Activated CD4-positive, alpha-beta T cell treated with anti-CD3 and anti-CD28 coated beads for 36 hours (primary cell): ENCODE measurements at regions of chr10 and their contacts with region 1.

Region 1: GRCh38 chr10:43361986-43362839 is 9.2 kb upstream of the FXYD4 start:
- DNase-seq: peak; percentile 99
- ATAC-seq: peak; percentile 96
- H3K4me3 Mint-ChIP-seq: peak overlapping the region; percentile 95
- H3K27ac Mint-ChIP-seq: peak overlapping the region; percentile 98
- H3K4me1 Mint-ChIP-seq: peaks cover 22% of the 10 kb centered on the region
- H3K27me3 Mint-ChIP-seq: no peaks in the 10 kb centered on the region

Region 2: GRCh38 chr10:42552493-42553407 is 809.5 kb before region 1 on chr10:
- CTCF ChIA-PET with region 1: no interaction called
- POLR2A ChIA-PET with region 1: no interaction called
- intact Hi-C with region 1: loop called in 1 of 2 experiments (anchors 2 kb)
- DNase-seq: peak; percentile 97
- ATAC-seq: peak; percentile 97
- H3K4me3 Mint-ChIP-seq: peak overlapping the region; percentile 94
- H3K27ac Mint-ChIP-seq: peak overlapping the region; percentile 94
- H3K4me1 Mint-ChIP-seq: peaks cover 33% of the 10 kb centered on the region
- H3K27me3 Mint-ChIP-seq: no peaks in the 10 kb centered on the region

Region 3: DNA sequence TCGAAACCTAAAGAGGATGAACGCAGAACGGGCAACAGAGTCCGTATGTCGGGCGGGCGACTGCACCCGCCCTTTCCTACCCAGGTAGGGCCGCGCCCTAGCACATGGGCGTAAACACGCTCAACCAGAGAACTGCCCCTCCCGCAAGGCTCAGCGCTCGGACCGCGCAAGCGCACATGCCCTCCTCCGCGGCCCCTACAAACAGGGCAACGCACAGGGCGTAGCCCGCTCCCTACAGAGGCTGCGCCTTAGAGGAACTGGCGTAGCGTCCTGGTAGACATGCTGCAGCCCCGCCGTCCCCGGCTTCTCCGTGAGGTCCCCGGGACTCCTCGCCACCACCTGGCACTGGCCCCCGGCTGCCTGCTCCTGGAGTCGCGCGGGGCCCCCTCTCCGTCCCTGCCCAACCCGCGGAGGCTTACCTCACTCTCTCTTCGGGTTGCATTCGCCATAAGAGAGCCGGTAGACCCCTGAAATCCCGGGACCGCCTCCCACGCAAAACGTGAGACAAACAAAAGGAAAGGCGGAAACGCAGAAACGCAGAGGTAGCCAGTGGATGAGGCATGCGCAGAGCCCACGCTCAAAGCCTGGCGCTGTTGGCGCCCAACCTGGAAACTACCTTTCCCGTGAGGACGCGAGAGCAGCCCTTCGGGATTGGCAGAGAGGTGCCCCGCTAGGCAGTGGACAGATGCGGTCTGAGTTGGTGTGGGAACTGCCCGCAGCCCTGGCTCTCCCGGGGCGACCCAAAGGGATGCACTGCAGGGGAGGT is 724.0 kb before region 1 on chr10 and contains the start of gene ZNF33B:
- CTCF ChIA-PET with region 1: no interaction called
- POLR2A ChIA-PET with region 1: no interaction called
- intact Hi-C with region 1: loop called in 1 of 2 experiments (anchors 5 kb)
- DNase-seq: peak; percentile 97
- ATAC-seq: peak; percentile 95
- H3K4me3 Mint-ChIP-seq: peak within 1 kb of the TSS; percentile 88
- H3K27ac Mint-ChIP-seq: peak within 1 kb of the TSS; percentile 97
- H3K4me1 Mint-ChIP-seq: peaks cover 25% of the 10 kb centered on the region
- H3K27me3 Mint-ChIP-seq: no peaks in the 10 kb centered on the region
- total RNA-seq, gene ZNF33B: 7.4 to 10.5 TPM

Region 4: GRCh38 chr10:43304687-43305340 is 57.4 kb before region 1 on chr10:
- CTCF ChIA-PET with region 1: no interaction called
- POLR2A ChIA-PET with region 1: no interaction called
- intact Hi-C with region 1: no loop called
- DNase-seq: peak; percentile 78
- ATAC-seq: peak; percentile 45
- H3K4me3 Mint-ChIP-seq: peak overlapping the region; percentile 51
- H3K27ac Mint-ChIP-seq: no peak overlapping the region
- H3K4me1 Mint-ChIP-seq: peaks cover 45% of the 10 kb centered on the region
- H3K27me3 Mint-ChIP-seq: no peaks in the 10 kb centered on the region

Region 5: GRCh38 chr10:43322769-43323168 is 39.4 kb before region 1 on chr10:
- CTCF ChIA-PET with region 1: interaction called, 3 read pairs
- POLR2A ChIA-PET with region 1: no interaction called
- intact Hi-C with region 1: loop called in 1 of 2 experiments (anchors 1 kb)
- DNase-seq: peak; percentile 93
- ATAC-seq: peak; percentile 100
- H3K4me3 Mint-ChIP-seq: no peak overlapping the region
- H3K27ac Mint-ChIP-seq: no peak overlapping the region
- H3K4me1 Mint-ChIP-seq: peaks cover 9% of the 10 kb centered on the region
- H3K27me3 Mint-ChIP-seq: peaks cover 2% of the 10 kb centered on the region

Region 6: DNA sequence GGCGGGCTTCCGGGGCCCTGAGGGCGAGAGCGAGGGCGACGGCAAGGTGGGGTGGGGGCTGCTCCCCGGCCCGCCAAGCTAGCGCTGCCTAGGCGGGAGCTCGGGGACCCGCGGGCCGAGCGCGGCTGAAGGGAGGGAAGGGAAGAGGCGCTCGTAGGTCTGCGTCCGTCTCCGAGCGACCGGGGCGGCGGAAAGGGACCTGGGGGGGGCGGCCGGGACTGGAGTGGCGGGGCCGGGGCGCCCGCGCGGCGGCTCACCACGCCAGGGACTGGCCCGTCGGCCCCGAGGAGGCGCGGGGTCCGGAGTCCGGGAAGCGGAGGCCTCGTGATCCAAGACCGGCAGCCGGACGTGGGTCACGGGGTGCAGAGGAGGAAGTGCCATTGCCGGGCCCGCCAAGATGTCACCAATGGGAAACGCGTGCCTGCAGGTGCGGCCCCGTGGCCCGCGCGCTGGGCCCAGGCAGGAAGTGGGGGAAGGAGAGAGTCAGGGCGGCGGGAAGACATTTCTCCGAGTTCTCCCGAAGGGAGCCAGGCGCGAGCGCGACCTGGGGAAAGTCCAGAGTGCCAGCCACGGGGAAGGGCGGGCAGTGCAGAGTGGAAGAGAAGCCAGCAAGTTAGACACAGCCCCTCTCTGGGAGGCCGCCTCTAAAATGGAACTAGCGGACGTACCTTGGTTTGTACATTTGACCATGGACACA is 34.9 kb after region 1 on chr10:
- CTCF ChIA-PET with region 1: interaction called, 3 read pairs
- POLR2A ChIA-PET with region 1: no interaction called
- intact Hi-C with region 1: loop called (anchors 1 to 5 kb)
- DNase-seq: peak; percentile 93
- ATAC-seq: peak; percentile 72
- H3K4me3 Mint-ChIP-seq: peak overlapping the region; percentile 99
- H3K27ac Mint-ChIP-seq: peak overlapping the region; percentile 96
- H3K4me1 Mint-ChIP-seq: peaks cover 63% of the 10 kb centered on the region
- H3K27me3 Mint-ChIP-seq: no peaks in the 10 kb centered on the region

Region 7: DNA sequence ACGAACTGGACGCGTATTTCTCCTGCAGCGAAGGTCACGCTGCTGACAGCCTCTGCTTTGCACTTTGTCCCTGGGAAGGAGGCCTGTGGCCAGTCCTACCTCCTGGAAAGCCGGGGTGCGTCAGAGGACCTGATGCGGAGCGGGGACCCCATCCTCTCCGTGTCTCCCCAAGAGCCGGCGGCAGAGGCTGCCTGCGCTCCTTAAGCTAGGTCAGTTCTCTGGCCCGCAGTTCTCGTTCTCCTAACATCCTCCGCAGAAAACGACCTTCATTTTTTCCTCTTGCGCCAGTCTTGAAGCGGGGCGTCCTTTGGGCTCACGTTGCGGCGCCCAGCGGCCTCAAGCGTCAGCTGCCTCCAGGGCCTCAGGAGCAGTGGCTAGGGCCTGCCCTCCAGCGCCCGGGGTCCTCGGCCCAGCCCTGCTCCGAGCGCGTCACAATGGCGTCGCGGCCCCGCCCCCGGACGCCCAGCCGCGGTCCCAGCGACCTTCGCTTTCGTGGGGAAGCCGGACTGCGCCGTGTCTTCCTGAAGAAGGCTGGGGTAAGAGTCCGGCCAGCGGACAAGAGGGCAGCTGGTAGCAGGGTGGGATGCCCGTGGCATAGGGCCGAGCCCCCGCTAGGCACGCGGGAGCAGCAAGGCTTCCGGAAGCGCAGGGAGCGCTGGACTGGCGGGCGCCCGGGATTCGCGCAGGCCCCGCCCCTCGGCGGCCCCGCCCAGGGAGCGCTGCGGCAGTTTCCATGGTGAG is 74.4 kb after region 1 on chr10 and contains the start of gene ZNF487:
- CTCF ChIA-PET with region 1: no interaction called
- POLR2A ChIA-PET with region 1: no interaction called
- intact Hi-C with region 1: loop called in 1 of 2 experiments (anchors 1 kb)
- DNase-seq: peak; percentile 92
- ATAC-seq: peak; percentile 97
- H3K4me3 Mint-ChIP-seq: peak within 1 kb of the TSS; percentile 98
- H3K27ac Mint-ChIP-seq: peak within 1 kb of the TSS; percentile 95
- H3K4me1 Mint-ChIP-seq: peaks cover 17% of the 10 kb centered on the region
- H3K27me3 Mint-ChIP-seq: no peaks in the 10 kb centered on the region
- total RNA-seq, gene ZNF487: 1.8 to 2.3 TPM